ENCODE measurements at regions of chr4 and their contacts with region 1.

Region 1: DNA sequence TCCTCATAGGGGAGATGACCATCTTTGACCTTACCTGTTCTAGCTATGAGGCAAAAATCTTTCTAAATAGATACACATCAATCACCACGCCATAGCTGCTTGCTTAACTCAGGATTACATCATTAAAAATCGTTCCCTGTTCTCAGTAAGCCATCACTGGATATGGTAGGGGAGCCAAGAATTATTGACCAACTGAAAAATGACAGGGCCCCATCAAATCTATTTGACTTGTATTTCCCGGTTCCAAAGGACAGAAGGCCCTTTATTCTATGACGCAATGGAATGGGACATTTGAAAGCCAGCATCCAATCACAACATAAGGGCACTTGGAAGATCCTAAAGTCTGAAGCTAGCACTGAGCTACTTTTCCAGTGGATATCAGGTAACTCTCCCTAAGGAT is 75.6 kb upstream of the NOCT start:
- DNase-seq: no peak
- H3K4me3 ChIP-seq: no peak overlapping the region
- CTCF ChIP-seq: no peak

Region 2: DNA sequence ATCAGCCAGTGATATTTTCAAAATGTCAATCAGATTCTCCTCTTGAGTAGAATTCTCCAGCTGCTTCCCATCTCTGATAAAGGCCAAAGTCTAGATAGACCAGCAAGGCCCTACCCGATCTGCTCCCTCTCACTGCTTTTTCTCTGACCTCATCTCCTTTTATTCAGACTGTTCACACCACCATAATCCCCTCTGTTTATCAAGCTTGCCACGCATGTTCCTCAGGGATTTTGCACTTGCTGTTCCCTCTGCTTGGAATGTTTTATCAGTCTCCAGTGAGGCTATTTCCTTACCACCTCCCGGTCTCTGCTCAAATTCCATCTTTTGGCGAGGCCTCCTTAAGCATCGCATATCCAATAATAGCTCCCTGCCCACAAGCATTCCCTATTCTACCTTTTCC is 95.7 kb after region 1 on chr4:
- in situ Hi-C with region 1: loop called (anchors 5 kb)
- DNase-seq: no peak
- H3K4me3 ChIP-seq: no peak overlapping the region
- CTCF ChIP-seq: no peak

Region 3: GRCh38 chr4:139582044-139582443 is 642.1 kb after region 1 on chr4:
- in situ Hi-C with region 1: no loop called
- DNase-seq: no peak
- H3K4me3 ChIP-seq: no peak overlapping the region
- CTCF ChIP-seq: no peak

Measured in astrocyte of the cerebellum (primary cell).